ENCODE measurements at regions of chr9 and their contacts with region 1.

Region 1: DNA sequence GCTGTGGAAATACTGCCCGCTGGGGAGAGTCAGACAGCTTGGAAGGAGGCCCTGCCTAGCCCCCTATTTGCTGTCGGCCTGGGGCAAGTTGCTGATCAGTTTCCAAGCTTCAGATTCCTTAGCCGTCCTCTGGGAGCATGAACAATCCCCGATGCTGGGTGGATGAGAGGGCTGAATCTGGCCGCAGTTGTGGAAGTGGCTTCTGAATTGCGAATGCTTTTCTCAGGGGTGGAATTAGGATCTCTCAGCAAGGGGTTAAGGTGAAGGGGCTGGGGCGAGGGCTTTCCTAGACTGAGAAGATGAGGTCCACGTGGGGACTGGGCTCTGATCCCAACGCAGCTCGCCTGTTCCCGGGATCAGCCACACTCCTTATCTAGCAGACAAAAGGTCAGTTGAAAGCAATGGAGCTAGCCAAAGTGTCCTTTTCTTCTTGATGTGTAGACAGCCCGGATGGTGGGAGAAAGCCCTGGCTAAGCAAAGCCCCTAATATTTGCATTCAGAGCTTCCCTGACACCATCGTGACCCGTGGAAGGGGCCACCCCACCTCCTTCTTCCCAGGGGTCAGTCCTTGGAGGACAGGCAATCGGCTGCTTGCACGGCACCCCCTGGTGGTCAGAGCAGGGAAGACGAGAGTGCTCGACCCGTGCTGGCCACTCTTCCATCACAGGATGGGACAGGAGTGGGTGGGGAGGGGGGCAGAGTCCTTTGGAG is 54.9 kb downstream of the COL15A1 start:
- DNase-seq: peak; percentile 73
- CTCF ChIP-seq: peak; percentile 94

Region 2: GRCh38 chr9:98916660-98917059 is 81.9 kb before region 1 on chr9:
- CTCF ChIA-PET with region 1: no interaction called
- POLR2A ChIA-PET with region 1: no interaction called
- DNase-seq: no peak
- CTCF ChIP-seq: no peak

Region 3: DNA sequence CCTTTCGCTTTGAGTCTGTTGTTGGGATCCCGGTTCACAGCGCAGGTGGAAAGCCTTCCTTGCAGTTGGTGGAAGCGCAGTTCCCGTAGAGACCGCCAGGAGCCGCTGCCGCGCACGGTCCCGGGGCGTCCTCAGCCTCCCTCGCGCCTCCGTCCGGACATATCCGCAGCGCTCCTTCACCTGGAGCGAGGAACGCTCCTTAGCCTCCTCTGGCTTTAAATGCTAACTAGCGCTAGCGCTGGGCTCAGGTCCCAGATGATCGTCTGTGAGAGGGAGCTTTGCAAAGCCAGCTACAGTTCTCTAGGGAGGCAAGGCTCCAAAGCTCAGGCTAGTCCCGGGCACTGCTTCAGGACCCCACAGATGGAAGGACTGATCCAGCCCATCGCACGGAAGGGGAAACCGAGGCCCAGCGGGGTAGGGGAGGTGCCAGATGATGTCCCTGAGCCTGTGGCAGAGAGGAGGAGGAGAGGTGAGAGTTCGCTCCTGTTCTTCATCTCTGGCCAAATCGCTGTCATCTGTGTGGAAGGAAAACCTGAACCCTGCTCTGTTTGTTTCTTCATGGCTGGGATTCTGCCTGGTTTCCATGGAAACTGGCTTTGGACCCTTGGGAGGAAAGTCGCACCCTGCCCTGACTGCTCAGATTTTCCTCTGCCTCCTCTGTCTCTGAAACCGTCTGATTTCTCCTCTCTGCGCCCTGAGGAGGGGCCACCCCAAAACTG is 23.4 kb before region 1 on chr9:
- CTCF ChIA-PET with region 1: interaction called, 97 read pairs
- POLR2A ChIA-PET with region 1: interaction called, 3 read pairs
- DNase-seq: peak; percentile 89
- CTCF ChIP-seq: peak; percentile 97

Region 4: DNA sequence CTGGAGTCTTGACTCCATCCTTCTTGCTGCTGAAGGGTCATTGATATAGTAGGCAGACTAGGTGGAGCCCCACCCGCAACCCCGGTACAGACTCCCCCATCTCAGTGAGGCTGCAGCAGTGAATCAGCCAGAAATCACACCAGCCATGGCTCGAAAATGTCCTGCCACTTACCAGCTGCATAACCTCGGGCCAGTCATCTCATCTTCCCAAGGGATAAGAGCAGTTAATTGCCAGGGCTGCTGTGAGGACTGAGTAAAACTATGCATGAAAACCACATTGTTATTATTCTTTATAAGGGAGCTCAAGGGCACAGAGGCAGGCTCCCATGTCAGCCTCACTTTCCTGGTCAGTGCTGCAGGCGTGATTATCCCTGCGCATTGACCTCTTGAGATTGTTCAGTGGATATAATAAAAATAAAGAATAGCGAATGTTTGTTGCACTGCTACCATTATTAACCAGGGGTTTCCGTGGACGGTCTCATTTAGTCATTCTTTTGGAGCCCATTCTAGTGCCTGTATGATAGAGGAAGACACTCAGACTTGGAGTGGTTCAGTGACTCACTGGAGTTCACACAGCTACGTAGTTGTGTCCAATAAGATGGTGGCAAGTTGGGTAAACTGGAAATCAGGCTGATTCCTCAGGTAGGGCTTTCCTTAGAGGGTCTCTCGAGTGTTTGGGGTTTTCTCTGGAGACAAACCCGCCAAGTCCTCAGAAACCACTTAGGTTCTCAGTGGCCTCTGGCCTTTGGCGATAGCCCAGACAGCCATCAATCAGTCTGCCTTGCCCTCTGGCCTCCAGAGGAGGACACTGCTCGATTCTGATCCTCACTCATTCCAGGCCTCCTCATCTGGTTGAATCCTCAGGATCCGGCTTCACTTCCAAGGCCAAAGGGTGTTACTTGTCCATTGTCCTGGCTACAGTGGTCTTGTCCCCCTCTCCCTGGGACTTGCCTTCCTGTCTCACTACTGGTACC is 15.0 kb before region 1 on chr9:
- CTCF ChIA-PET with region 1: interaction called, 97 read pairs
- POLR2A ChIA-PET with region 1: no interaction called
- DNase-seq: no peak
- CTCF ChIP-seq: no peak

Region 5: GRCh38 chr9:99012942-99013512 is 14.4 kb after region 1 on chr9:
- CTCF ChIA-PET with region 1: interaction called, 74 read pairs
- POLR2A ChIA-PET with region 1: no interaction called
- DNase-seq: no peak
- CTCF ChIP-seq: no peak

Region 6: GRCh38 chr9:99134893-99135341 is 136.3 kb after region 1 on chr9:
- CTCF ChIA-PET with region 1: interaction called, 39 read pairs
- POLR2A ChIA-PET with region 1: no interaction called
- DNase-seq: no peak
- CTCF ChIP-seq: no peak

Region 7: DNA sequence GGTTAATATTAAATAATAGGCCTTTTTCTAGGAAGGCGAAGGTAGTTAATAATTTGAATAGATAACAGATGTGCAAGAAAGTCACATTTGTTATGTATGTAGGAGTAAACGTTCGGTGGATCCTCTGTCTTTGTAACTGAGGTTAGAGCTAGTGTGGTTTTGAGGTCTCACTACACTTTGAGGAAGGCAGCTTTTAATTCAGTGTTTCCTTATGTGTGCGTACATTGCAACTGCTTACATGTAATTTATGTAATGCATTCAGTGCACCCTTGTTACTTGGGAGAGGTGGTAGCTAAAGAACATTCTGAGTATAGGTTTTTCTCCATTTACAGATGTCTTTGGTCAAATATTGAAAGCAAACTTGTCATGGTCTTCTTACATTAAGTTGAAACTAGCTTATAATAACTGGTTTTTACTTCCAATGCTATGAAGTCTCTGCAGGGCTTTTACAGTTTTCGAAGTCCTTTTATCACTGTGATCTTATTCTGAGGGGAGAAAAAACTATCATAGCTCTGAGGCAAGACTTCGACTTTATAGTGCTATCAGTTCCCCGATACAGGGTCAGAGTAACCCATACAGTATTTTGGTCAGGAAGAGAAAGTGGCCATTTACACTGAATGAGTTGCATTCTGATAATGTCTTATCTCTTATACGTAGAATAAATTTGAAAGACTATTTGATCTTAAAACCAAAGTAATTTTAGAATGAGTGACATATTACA is 152.0 kb after region 1 on chr9:
- CTCF ChIA-PET with region 1: interaction called, 11 read pairs
- POLR2A ChIA-PET with region 1: no interaction called
- DNase-seq: no peak
- CTCF ChIP-seq: no peak

Measured in GM10248 (cell line).